WTC11 (cell line): ENCODE measurements at regions of chr4 and their contacts with region 1.

Region 1: DNA sequence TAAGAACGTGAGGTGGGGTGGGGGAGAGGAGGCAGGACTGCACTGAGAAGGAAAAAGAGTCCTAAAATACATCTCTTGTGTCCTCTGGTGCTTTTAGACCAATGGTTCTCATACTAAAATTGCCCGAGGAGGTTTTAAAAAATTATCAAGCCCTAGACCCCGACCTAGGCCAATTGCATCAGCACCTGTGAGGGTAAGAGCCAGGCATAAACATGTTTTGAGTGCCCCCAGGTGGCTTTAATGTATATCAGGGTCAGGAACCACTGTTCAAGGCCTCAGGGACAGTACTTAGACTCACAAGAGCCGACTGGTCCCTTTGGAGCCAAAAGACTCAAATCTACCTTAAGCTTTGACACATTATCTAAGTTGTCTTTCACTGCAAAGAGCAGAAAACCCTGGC is 37.5 kb upstream of the TMEM150C start:
- DNase-seq: peak; percentile 55
- ATAC-seq: peak; percentile 98
- H3K4me3 Mint-ChIP-seq: no peak overlapping the region
- H3K27ac Mint-ChIP-seq: no peak overlapping the region
- H3K4me1 Mint-ChIP-seq: peaks cover 8% of the 10 kb centered on the region; the same call in 1 of the 2 replicates
- H3K27me3 Mint-ChIP-seq: no peaks in the 10 kb centered on the region; the same call in 1 of the 2 replicates
- CTCF ChIP-seq: no peak

Region 2: GRCh38 chr4:82462415-82462831 is 136.9 kb before region 1 on chr4:
- CTCF ChIA-PET with region 1: interaction called, 24 read pairs
- POLR2A ChIA-PET with region 1: no interaction called
- DNase-seq: peak; percentile 93
- ATAC-seq: peak; percentile 96
- H3K4me3 Mint-ChIP-seq: no peak overlapping the region
- H3K27ac Mint-ChIP-seq: no peak overlapping the region
- H3K4me1 Mint-ChIP-seq: no peaks in the 10 kb centered on the region
- H3K27me3 Mint-ChIP-seq: no peaks in the 10 kb centered on the region
- CTCF ChIP-seq: peak; percentile 85

Region 3: GRCh38 chr4:82555276-82555675 is 44.1 kb before region 1 on chr4:
- CTCF ChIA-PET with region 1: interaction called, 14 read pairs
- POLR2A ChIA-PET with region 1: no interaction called
- DNase-seq: no peak
- ATAC-seq: peak; percentile 75; the same call in 1 of the 2 replicates
- H3K4me3 Mint-ChIP-seq: no peak overlapping the region
- H3K27ac Mint-ChIP-seq: no peak overlapping the region
- H3K4me1 Mint-ChIP-seq: peaks cover 7% of the 10 kb centered on the region
- H3K27me3 Mint-ChIP-seq: peaks cover 6% of the 10 kb centered on the region
- CTCF ChIP-seq: no peak

Region 4: GRCh38 chr4:82618103-82618720 is 18.9 kb after region 1 on chr4:
- CTCF ChIA-PET with region 1: no interaction called
- POLR2A ChIA-PET with region 1: no interaction called
- DNase-seq: no peak
- ATAC-seq: no peak
- H3K4me3 Mint-ChIP-seq: no peak overlapping the region
- H3K27ac Mint-ChIP-seq: no peak overlapping the region
- H3K4me1 Mint-ChIP-seq: peaks cover 6% of the 10 kb centered on the region; the same call in 1 of the 2 replicates
- H3K27me3 Mint-ChIP-seq: no peaks in the 10 kb centered on the region
- CTCF ChIP-seq: no peak

Region 5: DNA sequence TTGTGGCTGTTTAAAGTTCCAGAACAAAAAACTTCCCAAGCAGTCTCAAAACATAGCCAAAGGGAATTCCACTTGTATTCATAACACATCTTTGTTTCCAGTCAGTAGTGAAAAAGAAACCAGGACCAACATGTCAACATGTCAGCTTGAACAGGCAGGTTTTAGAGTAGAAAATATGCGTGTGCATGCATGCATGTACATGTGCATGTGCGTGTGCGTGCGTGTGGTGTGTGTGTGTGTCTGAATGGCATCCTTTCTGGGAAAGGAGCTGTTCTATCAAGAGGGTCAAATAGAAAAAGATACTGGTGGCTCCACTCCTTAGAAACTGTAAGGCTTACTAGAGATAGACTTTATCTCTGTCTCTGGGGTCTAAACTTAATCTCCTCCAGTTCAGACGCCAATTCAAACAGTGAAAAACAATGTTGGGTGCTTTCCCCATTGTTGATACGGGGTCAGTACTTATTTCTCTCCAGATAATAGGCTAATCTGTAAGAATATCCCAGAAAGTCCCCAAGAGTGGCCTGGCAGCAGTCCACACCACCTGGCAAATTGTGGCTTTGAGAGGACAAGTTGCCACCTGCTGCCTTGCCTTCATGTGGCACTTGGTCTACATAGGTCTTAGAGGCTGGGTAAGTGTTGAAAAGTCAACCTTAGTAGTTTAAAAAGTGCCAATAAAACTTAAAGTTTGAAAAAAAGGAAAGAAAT is 88.9 kb after region 1 on chr4:
- CTCF ChIA-PET with region 1: no interaction called
- POLR2A ChIA-PET with region 1: no interaction called
- DNase-seq: no peak
- ATAC-seq: no peak
- H3K4me3 Mint-ChIP-seq: no peak overlapping the region
- H3K27ac Mint-ChIP-seq: no peak overlapping the region
- H3K4me1 Mint-ChIP-seq: no peaks in the 10 kb centered on the region
- H3K27me3 Mint-ChIP-seq: no peaks in the 10 kb centered on the region
- CTCF ChIP-seq: no peak

Region 6: GRCh38 chr4:83308672-83309071 is 709.3 kb after region 1 on chr4:
- CTCF ChIA-PET with region 1: no interaction called
- POLR2A ChIA-PET with region 1: no interaction called
- DNase-seq: peak; percentile 38
- ATAC-seq: peak; percentile 99
- H3K4me3 Mint-ChIP-seq: no peak overlapping the region
- H3K27ac Mint-ChIP-seq: no peak overlapping the region
- H3K4me1 Mint-ChIP-seq: peaks cover 27% of the 10 kb centered on the region
- H3K27me3 Mint-ChIP-seq: no peaks in the 10 kb centered on the region
- CTCF ChIP-seq: no peak